ENCODE measurements at regions of chr22 and their contacts with region 1.

Region 1: DNA sequence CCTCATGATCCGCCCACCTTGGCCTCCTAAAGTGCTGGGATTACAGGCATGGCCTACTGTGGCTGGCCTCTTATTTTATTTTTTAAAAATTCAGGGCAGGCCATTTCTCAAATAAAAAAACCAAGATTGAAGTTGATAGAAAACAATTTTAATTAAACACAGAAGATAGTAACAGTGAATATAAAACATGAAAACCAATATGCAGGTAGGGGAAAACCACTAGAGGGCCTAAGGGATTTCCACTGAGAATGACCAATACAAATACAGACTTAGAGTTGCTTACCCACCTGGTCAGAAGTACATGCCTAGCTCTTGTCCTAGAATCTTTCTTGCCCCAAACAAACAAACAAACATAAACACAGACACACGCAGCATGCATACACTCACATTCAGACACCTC is 1.7 kb upstream of the RTCB start:
- DNase-seq: peak in 1 of 2 experiments; percentile 5
- H3K4me3 ChIP-seq: no peak overlapping the region
- H3K4me3 Mint-ChIP-seq: no peak overlapping the region
- H3K27ac Mint-ChIP-seq: no peak overlapping the region
- H3K4me1 ChIP-seq: peaks cover 4% of the 10 kb centered on the region; the same call in 1 of the 2 replicates
- H3K4me1 Mint-ChIP-seq: peaks cover 6% of the 10 kb centered on the region
- H3K27me3 ChIP-seq: no peaks in the 10 kb centered on the region
- H3K27me3 Mint-ChIP-seq: peaks cover 2% of the 10 kb centered on the region
- CTCF ChIP-seq: peak; percentile 36 to 52

Region 2: DNA sequence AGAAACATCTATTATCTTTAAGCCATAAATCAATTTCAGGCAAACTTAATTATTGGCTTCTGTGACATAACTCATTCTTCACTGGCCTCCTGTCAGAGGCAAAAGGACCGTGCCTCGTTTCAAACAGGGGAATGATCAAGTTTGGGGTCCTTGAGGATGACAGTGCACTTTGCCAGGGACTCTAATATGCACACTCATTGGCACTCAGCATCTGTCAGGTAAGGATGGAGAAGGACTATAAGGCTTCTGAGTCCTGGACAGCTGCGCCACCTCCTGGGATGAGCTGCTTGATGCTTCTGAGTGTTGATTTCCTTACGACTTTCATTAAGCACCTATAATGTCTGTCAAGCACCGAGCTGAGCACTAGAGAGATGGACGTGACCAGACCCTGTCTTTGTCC is 30.3 kb after region 1 on chr22:
- CTCF ChIA-PET with region 1: interaction called, 6 read pairs
- POLR2A ChIA-PET with region 1: no interaction called
- intact Hi-C with region 1: loop called (anchors 1 kb)
- DNase-seq: peak; percentile 44 to 49
- H3K4me3 ChIP-seq: no peak overlapping the region
- H3K4me3 Mint-ChIP-seq: no peak overlapping the region
- H3K27ac Mint-ChIP-seq: no peak overlapping the region
- H3K4me1 ChIP-seq: no peaks in the 10 kb centered on the region
- H3K4me1 Mint-ChIP-seq: no peaks in the 10 kb centered on the region
- H3K27me3 ChIP-seq: no peaks in the 10 kb centered on the region; the same call in 1 of the 2 replicates
- H3K27me3 Mint-ChIP-seq: no peaks in the 10 kb centered on the region
- CTCF ChIP-seq: peak; percentile 34 to 60

Region 3: DNA sequence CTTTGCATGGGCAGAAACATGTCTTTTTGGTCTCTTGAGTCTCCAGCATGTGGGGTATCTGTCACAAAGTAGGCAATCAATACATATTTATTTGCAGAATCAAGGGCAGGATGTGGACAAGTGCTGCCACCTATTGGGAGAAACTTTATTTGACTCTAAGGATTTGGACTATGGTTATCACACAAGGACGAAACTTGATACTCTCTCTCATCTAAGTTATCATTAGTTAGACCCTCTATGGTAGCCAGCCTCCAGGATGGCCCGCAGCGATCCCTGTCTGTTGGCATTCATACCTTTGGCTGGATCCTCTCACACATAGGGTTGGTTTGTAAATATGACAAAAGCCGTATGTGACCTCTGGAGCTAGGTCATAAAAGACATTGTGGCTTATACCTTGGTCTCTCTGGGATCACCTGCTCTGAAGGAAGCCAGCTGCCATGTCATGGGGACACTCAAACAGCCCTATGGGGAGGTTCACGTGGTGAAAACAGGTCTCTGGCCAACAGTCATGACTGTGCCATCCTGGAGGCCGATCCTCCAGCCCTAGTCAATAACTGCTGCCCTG is 59.8 kb after region 1 on chr22:
- CTCF ChIA-PET with region 1: no interaction called
- POLR2A ChIA-PET with region 1: interaction called, 5 read pairs
- intact Hi-C with region 1: loop called (anchors 1 kb)
- DNase-seq: peak in 1 of 2 experiments; percentile 56
- H3K4me3 ChIP-seq: peak overlapping the region; percentile 69
- H3K4me3 Mint-ChIP-seq: peak overlapping the region; percentile 96
- H3K27ac Mint-ChIP-seq: no peak overlapping the region
- H3K4me1 ChIP-seq: peaks cover 10% of the 10 kb centered on the region
- H3K4me1 Mint-ChIP-seq: no peaks in the 10 kb centered on the region
- H3K27me3 ChIP-seq: no peaks in the 10 kb centered on the region
- H3K27me3 Mint-ChIP-seq: no peaks in the 10 kb centered on the region
- CTCF ChIP-seq: peak; percentile 28 to 43

Measured in Caco-2 (cell line).